ENCODE measurements at regions of chr1 and their contacts with region 1.

Region 1: DNA sequence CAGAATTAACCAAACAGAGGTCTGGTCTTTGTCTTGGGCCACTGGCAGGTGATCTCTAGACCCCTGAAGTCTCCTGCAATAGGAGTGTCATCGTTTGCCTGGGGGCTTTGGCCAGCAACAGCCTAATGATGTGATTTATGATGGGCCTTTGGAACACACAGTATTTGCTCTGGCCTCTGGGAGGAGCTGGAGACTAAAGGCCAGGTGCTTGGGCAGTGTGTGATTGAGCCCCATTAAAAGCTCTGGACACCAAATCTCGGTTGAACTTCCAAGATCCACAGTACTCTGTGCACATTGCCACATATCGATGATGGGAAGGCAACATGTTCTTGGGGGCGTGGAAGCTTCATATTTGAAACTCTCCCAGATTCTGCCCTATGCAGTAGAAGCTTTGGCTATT is 32.0 kb upstream of the TLR5 start:
- DNase-seq: no peak
- ATAC-seq: peak; percentile 85
- H3K4me3 ChIP-seq: no peak overlapping the region
- H3K27ac ChIP-seq: no peak overlapping the region
- H3K4me1 ChIP-seq: no peaks in the 10 kb centered on the region
- H3K27me3 ChIP-seq: no peaks in the 10 kb centered on the region; a peak in 1 of 4 replicates
- CTCF ChIP-seq: peak in 2 of 3 experiments; percentile 7 to 41; a peak in 1 of 6 replicates
- EP300 ChIP-seq: no peak
- POLR2A ChIP-seq: no peak
- RAD21 ChIP-seq: peak; percentile 19; the same call in 1 of the 2 replicates

Region 2: DNA sequence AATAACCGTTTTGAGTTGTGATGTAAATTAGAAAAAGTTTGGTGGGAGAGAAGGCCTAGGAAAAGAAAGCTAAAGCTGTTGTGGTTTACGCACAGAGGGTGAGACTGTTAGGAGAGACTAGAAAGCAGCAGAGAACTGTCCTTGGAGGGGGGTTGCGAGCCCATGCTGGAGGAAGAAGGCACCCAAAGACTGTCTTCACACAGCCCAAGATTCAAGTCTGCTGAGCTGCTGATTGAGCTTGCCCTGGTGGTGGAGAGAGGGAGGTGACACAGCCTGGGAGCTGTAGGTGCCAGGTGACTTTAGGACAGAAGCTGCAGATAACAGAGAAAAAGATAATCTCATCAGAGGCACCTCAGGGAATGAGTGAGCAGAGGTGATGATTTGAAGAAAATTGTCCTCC is 13.7 kb before region 1 on chr1:
- CTCF ChIA-PET with region 1: interaction called, 6 read pairs
- POLR2A ChIA-PET with region 1: interaction called, 3 read pairs
- RAD21 ChIA-PET with region 1: interaction called, 8 read pairs
- SMC1A ChIA-PET with region 1: interaction called, 13 read pairs
- in situ Hi-C with region 1: no loop called
- intact Hi-C with region 1: no loop called
- DNase-seq: no peak
- ATAC-seq: peak; percentile 74
- H3K4me3 ChIP-seq: no peak overlapping the region
- H3K27ac ChIP-seq: no peak overlapping the region
- H3K4me1 ChIP-seq: no peaks in the 10 kb centered on the region
- H3K27me3 ChIP-seq: peaks cover 0 to 7% of the 10 kb centered on the region in 2 experiments; a peak in 1 of 4 replicates
- CTCF ChIP-seq: 0 out of 6 replicates have a peak, but pooled peaks of 1 of the 3 experiments have one; percentile 19
- EP300 ChIP-seq: no peak
- POLR2A ChIP-seq: no peak
- RAD21 ChIP-seq: no peak